ENCODE measurements at regions of chr19 and their contacts with region 1.

Region 1: DNA sequence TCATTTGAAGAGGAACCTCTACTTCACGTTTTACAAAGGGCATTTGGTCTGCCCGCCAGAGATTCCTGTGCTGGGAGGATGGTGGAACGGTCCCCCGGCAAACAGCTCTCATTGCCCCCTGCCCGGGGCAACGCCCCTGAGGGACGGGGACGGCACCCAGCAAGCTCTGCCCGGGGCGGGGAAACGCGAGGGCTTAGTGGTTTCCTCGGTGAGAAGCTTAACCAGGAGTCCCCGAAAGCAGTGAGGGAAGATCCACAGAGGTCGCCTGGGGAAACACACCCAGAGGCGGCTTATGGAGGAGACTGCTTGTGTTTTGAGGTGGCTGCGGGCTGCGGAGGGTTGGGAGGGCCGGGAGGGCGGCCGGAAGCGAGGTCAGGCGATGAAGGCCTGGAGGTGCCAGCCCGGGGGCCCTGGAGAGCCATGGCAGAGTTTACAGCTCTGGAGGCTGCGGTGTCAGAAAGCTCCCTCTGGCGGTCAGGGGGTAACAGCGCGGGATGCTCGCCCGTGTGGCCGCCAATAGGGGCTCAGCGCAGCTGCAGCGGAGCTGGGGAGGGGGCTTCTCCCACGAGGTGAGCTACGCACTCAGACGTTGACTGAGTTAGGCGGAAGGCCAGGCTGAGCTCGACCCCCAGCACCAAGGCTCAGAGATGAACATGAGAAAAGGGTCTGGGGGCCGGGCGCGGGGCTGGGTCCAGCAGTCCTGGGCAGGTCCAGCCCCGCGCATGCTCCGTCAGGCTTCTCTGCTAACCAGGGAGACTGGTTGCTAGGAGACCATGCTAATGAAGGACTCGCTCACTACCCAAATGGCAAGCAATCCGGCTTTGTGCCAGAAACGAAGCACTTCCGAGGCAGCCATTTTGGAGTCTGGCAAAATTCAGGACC is 652 bp upstream of the TPGS1 start:
- DNase-seq: peak; percentile 96
- ATAC-seq: peak; percentile 68
- H3K4me3 Mint-ChIP-seq: peak overlapping the region; percentile 79
- H3K27ac Mint-ChIP-seq: peak overlapping the region; percentile 96
- H3K4me1 Mint-ChIP-seq: peaks cover 52% of the 10 kb centered on the region
- H3K27me3 Mint-ChIP-seq: no peaks in the 10 kb centered on the region

Region 2: GRCh38 chr19:294946-295686 is 211.5 kb before region 1 on chr19:
- CTCF ChIA-PET with region 1: interaction called, 10 read pairs
- POLR2A ChIA-PET with region 1: no interaction called
- DNase-seq: peak; percentile 49
- ATAC-seq: peak; percentile 66
- H3K4me3 Mint-ChIP-seq: no peak overlapping the region
- H3K27ac Mint-ChIP-seq: no peak overlapping the region
- H3K4me1 Mint-ChIP-seq: peaks cover 2% of the 10 kb centered on the region
- H3K27me3 Mint-ChIP-seq: peaks cover 36% of the 10 kb centered on the region

Region 3: GRCh38 chr19:488505-489417 is 17.9 kb before region 1 on chr19:
- CTCF ChIA-PET with region 1: interaction called, 12 read pairs
- POLR2A ChIA-PET with region 1: interaction called, 6 read pairs
- DNase-seq: peak; percentile 93
- ATAC-seq: peak; percentile 89
- H3K4me3 Mint-ChIP-seq: peak overlapping the region; percentile 78
- H3K27ac Mint-ChIP-seq: peak overlapping the region; percentile 89
- H3K4me1 Mint-ChIP-seq: peaks cover 14% of the 10 kb centered on the region
- H3K27me3 Mint-ChIP-seq: peaks cover 4% of the 10 kb centered on the region

Region 4: GRCh38 chr19:495402-496186 is 11.1 kb before region 1 on chr19:
- CTCF ChIA-PET with region 1: interaction called, 32 read pairs
- POLR2A ChIA-PET with region 1: no interaction called
- DNase-seq: peak; percentile 57
- ATAC-seq: peak; percentile 26
- H3K4me3 Mint-ChIP-seq: no peak overlapping the region
- H3K27ac Mint-ChIP-seq: no peak overlapping the region
- H3K4me1 Mint-ChIP-seq: peaks cover 3% of the 10 kb centered on the region
- H3K27me3 Mint-ChIP-seq: peaks cover 18% of the 10 kb centered on the region

Region 5: DNA sequence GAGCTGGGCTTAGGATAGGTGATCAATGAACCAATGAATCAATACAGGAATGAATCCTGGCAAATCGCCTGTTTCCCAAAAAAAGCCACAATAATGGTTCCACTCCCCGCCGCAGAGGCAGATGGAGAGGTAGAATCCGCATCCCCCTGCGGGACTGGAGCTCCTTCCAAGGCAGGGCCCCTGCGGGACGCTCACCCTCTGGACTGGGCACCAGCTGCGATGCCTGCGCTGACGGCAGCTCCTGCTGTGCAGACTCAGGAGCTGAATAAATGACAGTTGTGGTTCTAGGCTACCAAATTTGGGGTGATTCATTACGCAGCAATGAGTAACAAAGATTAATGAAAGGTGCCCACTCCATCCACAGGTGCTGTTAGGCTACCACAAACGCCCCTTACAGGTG is 16.1 kb after region 1 on chr19:
- CTCF ChIA-PET with region 1: interaction called, 33 read pairs
- POLR2A ChIA-PET with region 1: interaction called, 11 read pairs
- DNase-seq: no peak
- ATAC-seq: no peak
- H3K4me3 Mint-ChIP-seq: no peak overlapping the region
- H3K27ac Mint-ChIP-seq: no peak overlapping the region
- H3K4me1 Mint-ChIP-seq: no peaks in the 10 kb centered on the region
- H3K27me3 Mint-ChIP-seq: peaks cover 4% of the 10 kb centered on the region

Region 6: DNA sequence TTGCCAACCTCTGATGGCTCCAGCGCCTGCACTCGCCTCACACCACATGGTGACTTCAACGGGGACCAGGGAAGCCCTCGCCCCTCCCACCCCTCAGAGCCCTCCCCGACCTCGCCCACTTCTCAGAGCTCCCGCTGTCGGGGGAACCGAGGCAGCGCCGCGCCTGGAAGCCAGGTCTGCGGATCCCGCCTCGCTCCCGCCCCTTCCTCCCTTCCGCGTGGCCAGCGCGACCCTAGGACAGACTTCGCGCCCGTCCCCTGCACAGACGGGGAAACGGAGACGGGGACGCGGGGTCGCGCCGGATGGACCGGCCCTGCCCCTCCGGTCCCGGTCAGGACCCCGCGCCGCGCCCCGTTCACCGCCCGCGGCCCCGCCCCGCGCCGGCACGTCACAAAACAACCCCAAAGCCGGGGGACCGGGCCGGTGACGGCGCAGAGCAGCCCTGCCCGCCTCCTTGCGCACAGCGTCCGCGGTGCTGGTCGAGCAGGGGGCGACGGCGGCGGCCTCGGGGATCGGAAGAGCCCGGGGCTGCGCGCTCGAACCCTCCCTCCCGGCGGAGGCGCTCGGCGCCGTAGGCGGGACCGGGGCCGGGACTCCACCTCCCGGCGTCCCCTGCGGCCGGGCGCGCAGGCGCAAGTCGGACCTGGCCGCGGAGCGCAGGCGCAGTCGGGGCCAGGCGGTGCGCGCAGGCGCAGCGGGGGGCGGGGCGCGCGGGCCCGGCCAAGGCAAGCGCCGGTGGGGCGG is 24.5 kb after region 1 on chr19:
- CTCF ChIA-PET with region 1: interaction called, 87 read pairs
- POLR2A ChIA-PET with region 1: interaction called, 19 read pairs
- DNase-seq: peak; percentile 88
- ATAC-seq: peak; percentile 80
- H3K4me3 Mint-ChIP-seq: peak overlapping the region; percentile 78
- H3K27ac Mint-ChIP-seq: peak overlapping the region; percentile 89
- H3K4me1 Mint-ChIP-seq: peaks cover 22% of the 10 kb centered on the region
- H3K27me3 Mint-ChIP-seq: peaks cover 2% of the 10 kb centered on the region

Region 7: DNA sequence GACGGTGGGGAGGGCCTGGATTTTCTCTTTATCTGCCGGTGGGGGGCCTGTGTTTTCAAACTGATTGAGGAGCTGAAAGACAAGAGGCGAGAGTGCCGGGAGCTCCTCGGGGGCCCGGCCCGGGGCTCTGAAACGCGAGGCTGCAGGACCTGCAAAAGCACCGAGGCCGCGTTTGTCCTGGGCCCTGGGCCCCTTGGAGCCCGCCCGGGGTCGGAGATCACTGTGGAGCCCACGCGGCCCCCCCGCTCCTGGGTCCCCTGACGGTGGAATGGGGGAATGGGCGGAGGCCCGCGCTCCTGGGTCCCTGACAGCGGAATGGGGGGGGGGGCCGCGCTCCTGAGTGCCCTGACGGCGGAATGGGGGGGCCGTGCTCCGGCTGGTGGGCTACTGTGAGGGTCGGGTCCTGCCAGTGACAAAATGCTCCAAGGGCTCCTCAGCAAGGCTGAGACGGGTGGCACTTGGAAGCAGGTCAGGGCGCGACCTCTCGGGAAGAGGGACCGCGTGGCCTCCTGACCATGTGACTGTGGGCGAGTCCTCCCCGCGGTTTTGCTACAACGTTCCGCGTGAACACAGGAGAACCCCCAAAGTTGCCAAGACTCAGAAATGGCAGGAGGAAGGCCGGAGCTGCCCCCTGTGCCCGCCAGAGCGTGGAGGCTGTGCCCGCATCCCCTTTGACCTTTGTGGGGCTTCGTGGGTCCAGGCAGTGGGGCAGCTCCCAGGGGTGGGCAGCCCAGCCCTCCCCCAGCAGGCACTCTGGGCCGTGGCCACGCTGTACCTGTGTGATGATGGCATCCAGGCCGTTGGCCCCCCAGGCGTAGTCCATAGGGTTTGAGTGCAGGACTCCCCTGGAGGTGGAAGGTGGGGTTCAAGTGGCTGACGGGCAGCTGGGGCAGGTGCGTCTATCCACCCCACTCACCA is 142.5 kb after region 1 on chr19:
- CTCF ChIA-PET with region 1: no interaction called
- POLR2A ChIA-PET with region 1: no interaction called
- DNase-seq: no peak
- ATAC-seq: no peak
- H3K4me3 Mint-ChIP-seq: no peak overlapping the region
- H3K27ac Mint-ChIP-seq: no peak overlapping the region
- H3K4me1 Mint-ChIP-seq: no peaks in the 10 kb centered on the region
- H3K27me3 Mint-ChIP-seq: no peaks in the 10 kb centered on the region

Measured in activated CD8-positive, alpha-beta T cell treated with anti-CD3 and anti-CD28 coated beads, Interleukin-2, amount 10 ng/mL, durations not matched to agents 7 days and 5 days (primary cell).